ENCODE measurements at regions of chr18 and their contacts with region 1.

Region 1: DNA sequence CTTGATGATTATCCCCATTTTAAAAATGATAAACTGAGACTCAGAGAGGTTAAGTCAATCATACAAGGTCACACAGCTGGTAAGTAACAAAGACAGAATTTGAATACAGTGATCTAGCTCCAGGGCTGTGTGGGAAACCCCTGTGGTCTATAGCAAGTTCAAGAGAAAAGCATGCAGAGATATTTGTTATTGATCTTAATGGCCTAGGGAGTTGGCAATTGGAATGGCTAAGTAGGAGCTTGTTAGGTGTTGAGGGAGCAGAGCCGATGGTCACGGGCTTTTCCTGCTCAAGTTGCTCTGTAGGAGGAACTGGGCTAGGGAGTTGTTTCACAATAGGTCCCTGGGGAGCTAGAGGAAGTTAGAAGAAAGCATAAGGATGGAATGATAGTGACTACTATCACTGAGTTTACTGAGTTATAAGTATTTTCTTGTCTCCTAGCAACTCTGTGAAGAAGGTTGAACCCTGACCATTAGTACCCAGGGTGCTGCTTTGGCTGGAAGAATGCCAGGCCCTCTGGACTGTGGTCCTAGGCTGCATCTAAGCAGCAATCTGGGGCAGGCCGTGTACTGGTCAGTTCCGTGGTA is 30.0 kb downstream of the RNF125 start:
- DNase-seq: peak in 1 of 35 experiments; percentile 35
- ATAC-seq: peak in 2 of 4 experiments; percentile 24 to 41
- H3K4me3 ChIP-seq: no peak overlapping the region
- H3K4me3 Mint-ChIP-seq: peak overlapping the region in 1 of 3 donors; percentile 49
- H3K27ac ChIP-seq: peak overlapping the region; percentile 56
- H3K27ac Mint-ChIP-seq: peak overlapping the region; percentile 80 to 91
- H3K4me1 ChIP-seq: peaks cover 20 to 36% of the 10 kb centered on the region in 2 experiments
- H3K4me1 Mint-ChIP-seq: peaks cover 27 to 48% (median 42%) of the 10 kb centered on the region in 3 donors
- H3K27me3 ChIP-seq: no peaks in the 10 kb centered on the region
- H3K27me3 Mint-ChIP-seq: no peaks in the 10 kb centered on the region

Region 2: DNA sequence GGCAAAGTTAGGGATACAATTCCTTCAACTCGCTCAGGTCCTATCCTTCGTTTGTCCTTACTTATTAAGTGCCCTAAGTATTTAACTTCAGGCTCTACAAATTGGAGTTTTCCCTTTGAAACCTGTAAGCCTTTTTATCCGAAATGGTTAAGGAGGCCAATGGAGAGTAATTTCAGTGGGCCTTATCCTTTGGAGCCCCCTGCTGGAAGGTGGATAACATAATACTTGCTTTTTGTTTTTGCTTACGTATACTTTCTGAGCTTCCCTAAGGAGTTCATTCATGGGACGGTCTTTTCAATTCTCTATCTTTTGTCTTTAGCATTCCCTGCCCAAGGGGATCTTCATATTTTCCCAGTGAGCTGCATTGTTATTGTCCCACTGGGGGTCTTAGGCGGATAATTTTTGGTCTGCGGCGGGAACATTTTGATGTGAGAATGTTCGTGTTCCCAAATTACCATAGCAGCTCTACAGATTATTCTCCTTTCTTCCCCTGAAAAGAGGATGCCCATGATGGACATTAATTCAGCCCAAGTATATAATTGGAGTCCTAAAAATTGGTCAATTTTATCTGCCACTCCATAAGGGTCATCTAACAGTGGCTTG is 71.2 kb before region 1 on chr18:
- CTCF ChIA-PET with region 1: no interaction called
- POLR2A ChIA-PET with region 1: interaction called in 1 of 2 experiments, 13 read pairs
- DNase-seq: peak in 25 of 35 experiments; percentile 1 to 65 (median 15)
- ATAC-seq: no peak
- H3K4me3 ChIP-seq: no peak overlapping the region
- H3K4me3 Mint-ChIP-seq: no peak overlapping the region
- H3K27ac ChIP-seq: no peak overlapping the region
- H3K27ac Mint-ChIP-seq: no peak overlapping the region
- H3K4me1 ChIP-seq: no peaks in the 10 kb centered on the region
- H3K4me1 Mint-ChIP-seq: no peaks in the 10 kb centered on the region
- H3K27me3 ChIP-seq: no peaks in the 10 kb centered on the region
- H3K27me3 Mint-ChIP-seq: no peaks in the 10 kb centered on the region

Region 3: GRCh38 chr18:32104530-32104929 is 55.9 kb after region 1 on chr18:
- CTCF ChIA-PET with region 1: no interaction called
- POLR2A ChIA-PET with region 1: no interaction called
- DNase-seq: no peak
- ATAC-seq: no peak
- H3K4me3 ChIP-seq: no peak overlapping the region
- H3K4me3 Mint-ChIP-seq: no peak overlapping the region
- H3K27ac ChIP-seq: no peak overlapping the region
- H3K27ac Mint-ChIP-seq: no peak overlapping the region
- H3K4me1 ChIP-seq: peaks cover 4 to 29% of the 10 kb centered on the region in 2 experiments
- H3K4me1 Mint-ChIP-seq: peaks cover 62 to 69% (median 63%) of the 10 kb centered on the region in 3 donors
- H3K27me3 ChIP-seq: no peaks in the 10 kb centered on the region
- H3K27me3 Mint-ChIP-seq: no peaks in the 10 kb centered on the region

Region 4: DNA sequence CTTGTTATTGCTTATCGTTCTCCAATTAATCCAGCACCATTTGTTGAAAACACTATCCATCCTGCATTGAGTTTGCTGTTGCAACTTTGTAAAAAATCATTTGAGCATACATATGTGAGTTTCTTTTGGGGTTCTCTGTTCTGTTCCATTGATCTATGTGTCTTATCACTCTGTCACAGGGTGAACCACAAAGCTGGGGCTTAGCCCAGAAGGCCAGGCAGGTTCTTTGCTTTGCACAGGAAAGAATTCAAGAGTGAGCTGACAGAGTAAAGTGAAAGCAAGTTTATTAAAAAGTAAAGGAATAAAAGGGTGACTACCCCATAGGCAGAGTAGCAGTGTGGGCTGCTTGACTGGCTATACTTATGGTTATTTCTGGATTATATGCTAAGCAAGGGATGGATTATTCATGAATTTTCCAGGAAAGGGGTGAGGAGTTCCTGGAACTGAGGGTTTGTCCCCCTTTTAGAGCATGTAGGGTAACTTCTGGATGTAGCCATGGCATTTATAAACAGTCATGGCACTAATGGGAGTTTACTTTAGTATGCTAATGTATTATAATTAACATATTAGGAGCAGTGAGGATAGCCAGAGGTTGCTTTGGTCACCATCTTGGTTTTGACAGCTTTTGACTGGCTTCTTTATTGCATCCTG is 89.9 kb after region 1 on chr18:
- CTCF ChIA-PET with region 1: no interaction called
- POLR2A ChIA-PET with region 1: interaction called in 1 of 2 experiments, 11 read pairs
- DNase-seq: peak in 4 of 35 experiments; percentile 7 to 16 (median 11)
- ATAC-seq: peak in 3 of 4 experiments; percentile 38 to 47 (median 42)
- H3K4me3 ChIP-seq: no peak overlapping the region
- H3K4me3 Mint-ChIP-seq: no peak overlapping the region
- H3K27ac ChIP-seq: no peak overlapping the region
- H3K27ac Mint-ChIP-seq: peak overlapping the region; percentile 15 to 85
- H3K4me1 ChIP-seq: peaks cover 0 to 5% of the 10 kb centered on the region in 2 experiments
- H3K4me1 Mint-ChIP-seq: peaks cover 7 to 8% (median 7%) of the 10 kb centered on the region in 3 donors
- H3K27me3 ChIP-seq: no peaks in the 10 kb centered on the region
- H3K27me3 Mint-ChIP-seq: no peaks in the 10 kb centered on the region

Region 5: GRCh38 chr18:32624275-32624674 is 575.7 kb after region 1 on chr18:
- CTCF ChIA-PET with region 1: no interaction called
- POLR2A ChIA-PET with region 1: interaction called in 1 of 2 experiments, 11 read pairs
- DNase-seq: no peak
- ATAC-seq: no peak
- H3K4me3 ChIP-seq: no peak overlapping the region
- H3K4me3 Mint-ChIP-seq: no peak overlapping the region
- H3K27ac ChIP-seq: no peak overlapping the region
- H3K27ac Mint-ChIP-seq: no peak overlapping the region
- H3K4me1 ChIP-seq: no peaks in the 10 kb centered on the region
- H3K4me1 Mint-ChIP-seq: no peaks in the 10 kb centered on the region
- H3K27me3 ChIP-seq: no peaks in the 10 kb centered on the region
- H3K27me3 Mint-ChIP-seq: peaks cover 2 to 20% of the 10 kb centered on the region in 2 donors